CD8-positive, alpha-beta memory T cell (primary cell): ENCODE measurements at regions of chr11 and their contacts with region 1.

Region 1: DNA sequence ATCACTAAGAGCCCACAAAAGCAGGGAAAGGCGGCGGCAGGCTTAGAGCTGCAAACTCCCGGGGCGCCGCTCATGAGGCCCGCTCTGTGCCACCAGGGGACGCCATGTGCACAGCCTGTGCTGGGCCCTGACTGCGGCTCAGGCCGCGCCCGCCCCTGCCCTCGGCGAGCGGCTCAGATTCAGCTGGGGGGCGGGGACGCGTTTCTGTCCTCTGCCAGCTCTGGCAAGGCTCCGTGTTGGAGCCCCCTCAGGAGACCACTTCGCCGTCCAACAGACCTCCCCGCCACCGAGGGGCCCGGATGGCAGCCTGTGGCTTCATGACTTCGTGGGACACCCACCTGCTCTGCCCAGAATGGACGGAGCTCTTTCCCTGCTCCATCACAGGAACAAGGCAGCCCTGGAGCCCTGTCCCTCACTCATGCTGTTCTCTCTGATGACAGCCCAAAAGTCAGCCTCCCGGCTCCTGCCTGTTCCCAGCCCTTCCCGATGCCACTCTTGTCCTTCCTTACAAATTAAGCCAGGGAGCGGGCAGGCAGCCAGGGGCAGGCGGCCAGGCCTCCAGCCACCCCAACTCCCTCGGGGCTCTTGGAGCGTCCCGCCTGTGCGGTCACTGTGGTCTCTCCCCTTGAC is 69.1 kb downstream of the NAT10 start:
- DNase-seq: peak; percentile 65 to 82 (median 67)
- H3K4me3 ChIP-seq: no peak overlapping the region
- H3K4me3 Mint-ChIP-seq: peak overlapping the region in 5 of 7 donors; percentile 39 to 64 (median 51)
- H3K27ac ChIP-seq: no peak overlapping the region
- H3K27ac Mint-ChIP-seq: no peak overlapping the region
- H3K4me1 ChIP-seq: no peaks in the 10 kb centered on the region
- H3K4me1 Mint-ChIP-seq: peaks cover 0 to 12% (median 0%) of the 10 kb centered on the region in 3 donors
- H3K27me3 ChIP-seq: no peaks in the 10 kb centered on the region
- H3K27me3 Mint-ChIP-seq: peaks cover 7 to 10% of the 10 kb centered on the region in 2 donors

Region 2: DNA sequence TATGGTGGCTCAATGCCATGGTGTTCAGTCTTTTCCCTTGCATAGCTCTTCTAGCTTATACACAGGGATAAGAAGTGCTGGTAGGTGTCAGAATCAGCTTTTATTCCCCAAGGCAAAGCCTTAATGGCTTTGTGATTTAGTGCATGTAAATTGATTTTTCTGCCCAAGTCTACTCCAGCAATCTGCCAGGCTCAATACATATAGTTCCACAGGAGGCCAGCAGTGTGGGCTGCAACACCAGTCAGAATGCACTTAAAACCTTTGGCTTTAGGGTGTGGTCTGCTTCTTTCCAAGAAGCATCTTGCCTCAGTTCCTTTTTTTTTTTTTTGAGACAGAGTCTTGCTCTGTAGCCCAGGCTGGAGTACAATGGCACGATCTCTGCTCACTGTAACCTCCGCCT is 137.5 kb before region 1 on chr11:
- CTCF ChIA-PET with region 1: no interaction called
- POLR2A ChIA-PET with region 1: no interaction called
- DNase-seq: no peak
- H3K4me3 ChIP-seq: no peak overlapping the region
- H3K4me3 Mint-ChIP-seq: no peak overlapping the region
- H3K27ac ChIP-seq: no peak overlapping the region
- H3K27ac Mint-ChIP-seq: no peak overlapping the region
- H3K4me1 ChIP-seq: no peaks in the 10 kb centered on the region
- H3K4me1 Mint-ChIP-seq: no peaks in the 10 kb centered on the region
- H3K27me3 ChIP-seq: no peaks in the 10 kb centered on the region
- H3K27me3 Mint-ChIP-seq: peaks cover 0 to 11% of the 10 kb centered on the region in 2 donors

Region 3: DNA sequence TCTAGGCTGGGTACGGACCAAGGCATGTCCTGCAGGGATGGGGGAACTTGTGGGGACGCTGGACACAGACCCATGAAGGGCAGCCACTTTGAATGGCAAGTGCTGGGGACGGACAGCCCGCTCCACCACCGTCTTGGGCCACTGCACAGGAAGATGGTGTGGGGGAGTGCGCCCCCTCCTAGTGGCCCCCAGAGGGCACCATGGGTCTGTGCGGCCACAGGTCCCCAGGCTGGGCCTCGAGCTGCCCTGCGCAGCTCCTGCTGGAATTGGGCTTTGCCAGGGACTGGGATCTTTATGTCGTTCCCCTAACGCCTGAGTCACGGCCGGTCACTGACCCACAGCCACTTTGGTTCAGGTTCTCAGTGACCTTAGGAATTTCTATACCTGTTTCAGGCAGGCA is 24.7 kb before region 1 on chr11:
- CTCF ChIA-PET with region 1: interaction called, 11 read pairs
- POLR2A ChIA-PET with region 1: no interaction called
- DNase-seq: no peak
- H3K4me3 ChIP-seq: no peak overlapping the region
- H3K4me3 Mint-ChIP-seq: no peak overlapping the region
- H3K27ac ChIP-seq: no peak overlapping the region
- H3K27ac Mint-ChIP-seq: peak overlapping the region in 2 of 8 donors; percentile 47 to 61
- H3K4me1 ChIP-seq: no peaks in the 10 kb centered on the region
- H3K4me1 Mint-ChIP-seq: peaks cover 0 to 3% (median 0%) of the 10 kb centered on the region in 3 donors
- H3K27me3 ChIP-seq: no peaks in the 10 kb centered on the region
- H3K27me3 Mint-ChIP-seq: no peaks in the 10 kb centered on the region

Region 4: DNA sequence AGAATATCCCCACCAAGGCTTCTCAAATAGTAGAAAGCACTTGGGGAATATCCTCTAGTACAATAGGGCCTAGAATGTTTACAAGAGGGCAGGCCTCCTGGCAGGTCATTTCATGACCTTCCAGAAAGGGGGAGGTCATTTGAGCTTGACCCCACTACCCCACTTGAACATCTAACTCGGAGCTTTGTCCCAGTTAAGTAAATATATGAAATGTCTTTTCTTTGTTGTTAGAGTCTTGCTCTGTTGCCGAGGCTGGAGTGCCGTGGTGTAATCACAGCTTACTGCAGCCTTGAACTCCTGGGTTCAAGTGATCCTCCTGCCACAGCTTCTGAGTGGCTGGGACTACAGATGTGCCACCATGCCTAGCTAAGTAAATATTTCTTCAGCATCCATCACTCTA is 74.9 kb after region 1 on chr11:
- CTCF ChIA-PET with region 1: interaction called, 10 read pairs
- POLR2A ChIA-PET with region 1: no interaction called
- DNase-seq: no peak
- H3K4me3 ChIP-seq: no peak overlapping the region
- H3K4me3 Mint-ChIP-seq: peak overlapping the region in 5 of 7 donors; percentile 29 to 77 (median 58)
- H3K27ac ChIP-seq: no peak overlapping the region
- H3K27ac Mint-ChIP-seq: peak overlapping the region in 2 of 8 donors; percentile 31 to 53
- H3K4me1 ChIP-seq: peaks cover 50% of the 10 kb centered on the region
- H3K4me1 Mint-ChIP-seq: peaks cover 46 to 69% (median 54%) of the 10 kb centered on the region in 3 donors
- H3K27me3 ChIP-seq: no peaks in the 10 kb centered on the region
- H3K27me3 Mint-ChIP-seq: peaks cover 6 to 17% of the 10 kb centered on the region in 2 donors

Region 5: DNA sequence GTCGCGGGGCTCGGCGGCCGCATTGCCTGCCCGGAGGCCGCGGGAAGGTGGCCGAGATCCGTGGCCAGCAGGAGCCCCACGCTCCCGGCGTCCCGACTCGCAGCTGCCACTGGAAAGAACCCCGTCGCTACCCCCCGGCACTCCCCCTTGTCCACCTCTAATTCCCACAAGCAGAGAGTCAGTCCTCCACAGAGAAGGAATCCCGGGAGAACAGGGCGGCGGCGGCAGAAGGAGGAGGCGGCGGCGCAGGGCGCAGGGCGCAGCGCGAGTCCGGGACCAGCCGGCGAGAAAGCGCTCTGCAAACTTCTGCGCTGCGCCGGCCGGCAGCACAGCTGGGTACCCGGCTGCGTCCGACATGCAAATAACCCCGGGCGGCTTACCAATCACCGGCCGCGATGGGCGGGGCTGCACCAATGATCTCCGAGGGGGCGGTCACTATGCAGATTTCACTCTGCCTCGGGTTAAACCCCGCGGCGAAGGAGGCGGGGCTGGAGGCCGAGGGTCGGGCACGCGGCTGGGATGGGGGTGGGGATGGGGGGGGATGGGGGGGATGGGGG is 183.3 kb after region 1 on chr11 and contains the start of gene ABTB2:
- CTCF ChIA-PET with region 1: interaction called, 113 read pairs
- POLR2A ChIA-PET with region 1: interaction called, 8 read pairs
- DNase-seq: peak; percentile 95 to 97 (median 95)
- H3K4me3 ChIP-seq: peak within 1 kb of the TSS; percentile 83
- H3K4me3 Mint-ChIP-seq: peak within 1 kb of the TSS; percentile 82 to 95 (median 90)
- H3K27ac ChIP-seq: peak within 1 kb of the TSS; percentile 38
- H3K27ac Mint-ChIP-seq: peak within 1 kb of the TSS; percentile 5 to 90 (median 82)
- H3K4me1 ChIP-seq: peaks cover 8% of the 10 kb centered on the region
- H3K4me1 Mint-ChIP-seq: peaks cover 13 to 26% (median 23%) of the 10 kb centered on the region in 3 donors
- H3K27me3 ChIP-seq: peaks cover 16% of the 10 kb centered on the region
- H3K27me3 Mint-ChIP-seq: peaks cover 25 to 59% of the 10 kb centered on the region in 2 donors
- total RNA-seq, gene ABTB2: 5.4 to 5.5 TPM